ENCODE measurements at regions of chr11 and their contacts with region 1.

Region 1: DNA sequence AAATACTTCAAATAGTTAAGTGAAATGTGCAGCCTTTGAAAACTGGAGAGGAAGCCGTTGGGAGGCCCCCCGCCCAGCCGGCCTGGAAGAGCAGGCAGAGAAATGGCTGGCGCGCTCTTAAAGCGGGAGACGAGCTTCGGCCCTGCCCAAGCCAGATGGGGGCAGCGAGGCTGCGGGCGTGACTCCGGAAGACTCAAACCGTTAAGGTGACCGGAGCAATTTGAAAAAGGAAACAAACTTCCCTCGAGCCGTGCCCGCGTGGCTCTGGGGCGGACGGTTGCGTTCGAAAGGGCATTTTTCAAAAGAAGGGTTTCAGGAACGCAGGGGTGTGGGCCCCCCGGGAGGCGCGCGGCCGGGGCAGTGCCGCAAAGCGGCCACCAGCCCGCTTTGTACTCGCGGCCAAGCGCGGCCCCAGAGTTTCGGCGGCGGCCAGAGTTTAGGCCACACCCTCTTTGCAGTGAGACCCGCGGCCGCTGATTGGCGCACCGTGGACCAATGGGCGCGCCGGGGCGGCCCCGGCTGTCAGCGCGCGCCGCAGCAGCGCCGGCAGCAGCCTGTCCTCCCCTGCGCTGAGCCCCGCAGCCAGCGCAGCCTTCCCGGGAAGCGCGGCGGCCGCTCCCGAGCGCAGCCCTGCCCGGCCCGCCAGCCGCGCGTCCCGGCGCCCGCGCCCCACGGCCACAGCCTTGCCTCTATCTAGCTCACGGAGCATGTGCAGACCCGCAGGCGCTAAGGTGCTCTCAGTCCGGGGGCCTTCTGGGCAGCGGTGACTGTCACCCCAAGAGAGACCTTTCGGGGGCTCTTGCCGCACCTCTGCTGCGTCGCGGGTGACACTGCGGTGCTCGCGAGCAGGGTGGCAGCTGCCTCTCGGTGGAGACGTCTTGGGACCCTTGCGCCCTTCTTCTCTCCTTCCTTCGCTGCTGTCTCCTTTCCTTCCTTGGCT is at the start of gene NAV2:
- DNase-seq: peak; percentile 75
- H3K4me3 Mint-ChIP-seq: peak within 1 kb of the TSS; percentile 85
- H3K27ac Mint-ChIP-seq: peak within 1 kb of the TSS; percentile 78
- H3K4me1 Mint-ChIP-seq: peaks cover 17% of the 10 kb centered on the region
- H3K27me3 Mint-ChIP-seq: peaks cover 58% of the 10 kb centered on the region
- total RNA-seq, gene NAV2: 0.12 and 0.34 TPM in 2 replicates

Region 2: GRCh38 chr11:19116971-19117750 is 595.4 kb before region 1 on chr11 and contains the start of gene ZDHHC13:
- intact Hi-C with region 1: loop called (anchors 2 kb)
- DNase-seq: peak; percentile 94
- H3K4me3 Mint-ChIP-seq: peak within 1 kb of the TSS; percentile 93
- H3K27ac Mint-ChIP-seq: peak within 1 kb of the TSS; percentile 84
- H3K4me1 Mint-ChIP-seq: peaks cover 54% of the 10 kb centered on the region
- H3K27me3 Mint-ChIP-seq: peaks cover 12% of the 10 kb centered on the region
- total RNA-seq, gene ZDHHC13: 25.0 and 28.9 TPM in 2 replicates

Region 3: GRCh38 chr11:19441752-19442553 is 270.6 kb before region 1 on chr11:
- intact Hi-C with region 1: loop called (anchors 2 kb)
- DNase-seq: peak; percentile 41
- H3K4me3 Mint-ChIP-seq: no peak overlapping the region
- H3K27ac Mint-ChIP-seq: peak overlapping the region; percentile 18
- H3K4me1 Mint-ChIP-seq: peaks cover 24% of the 10 kb centered on the region
- H3K27me3 Mint-ChIP-seq: peaks cover 46% of the 10 kb centered on the region

Region 4: DNA sequence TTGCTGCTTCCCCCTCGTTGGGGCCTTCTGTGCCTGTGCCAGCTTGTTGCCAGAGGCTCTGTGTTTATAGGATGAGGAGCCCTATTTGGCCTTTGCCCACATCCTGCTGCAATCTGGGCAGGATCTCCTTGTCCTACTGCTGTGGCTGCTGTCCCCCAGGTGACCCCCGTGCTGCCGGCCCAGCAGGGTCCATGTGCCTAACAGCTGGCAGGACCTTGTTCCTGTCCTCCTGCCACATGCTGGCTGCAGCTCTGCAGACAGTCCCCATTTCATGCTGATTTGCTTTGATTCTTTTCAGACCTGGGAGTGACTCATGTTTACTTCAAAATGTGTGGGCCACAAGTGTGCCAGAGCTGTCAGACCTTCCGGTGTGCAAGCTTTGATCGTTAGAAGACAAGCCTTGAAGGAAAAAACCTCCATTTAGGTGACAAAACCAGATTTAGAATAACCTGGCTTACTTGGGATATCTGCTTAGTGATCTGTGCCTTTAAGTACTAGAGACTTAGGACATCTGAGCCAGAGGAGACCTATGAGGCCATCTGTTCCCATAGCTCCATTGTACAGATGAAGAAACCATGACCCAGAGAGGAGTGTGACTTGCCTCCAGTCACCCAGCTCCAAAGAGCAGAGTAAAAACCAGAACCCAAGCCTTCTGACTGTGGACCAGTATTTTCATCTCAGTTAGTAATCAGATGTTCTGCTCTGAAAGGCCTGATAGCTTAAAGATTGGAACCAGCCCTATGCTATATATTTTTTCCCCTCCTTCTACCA is 11.2 kb after region 1 on chr11:
- intact Hi-C with region 1: loop called (anchors 1 kb)
- DNase-seq: peak; percentile 18
- H3K4me3 Mint-ChIP-seq: no peak overlapping the region
- H3K27ac Mint-ChIP-seq: peak overlapping the region; percentile 49
- H3K4me1 Mint-ChIP-seq: peaks cover 12% of the 10 kb centered on the region
- H3K27me3 Mint-ChIP-seq: peaks cover 20% of the 10 kb centered on the region

Region 5: DNA sequence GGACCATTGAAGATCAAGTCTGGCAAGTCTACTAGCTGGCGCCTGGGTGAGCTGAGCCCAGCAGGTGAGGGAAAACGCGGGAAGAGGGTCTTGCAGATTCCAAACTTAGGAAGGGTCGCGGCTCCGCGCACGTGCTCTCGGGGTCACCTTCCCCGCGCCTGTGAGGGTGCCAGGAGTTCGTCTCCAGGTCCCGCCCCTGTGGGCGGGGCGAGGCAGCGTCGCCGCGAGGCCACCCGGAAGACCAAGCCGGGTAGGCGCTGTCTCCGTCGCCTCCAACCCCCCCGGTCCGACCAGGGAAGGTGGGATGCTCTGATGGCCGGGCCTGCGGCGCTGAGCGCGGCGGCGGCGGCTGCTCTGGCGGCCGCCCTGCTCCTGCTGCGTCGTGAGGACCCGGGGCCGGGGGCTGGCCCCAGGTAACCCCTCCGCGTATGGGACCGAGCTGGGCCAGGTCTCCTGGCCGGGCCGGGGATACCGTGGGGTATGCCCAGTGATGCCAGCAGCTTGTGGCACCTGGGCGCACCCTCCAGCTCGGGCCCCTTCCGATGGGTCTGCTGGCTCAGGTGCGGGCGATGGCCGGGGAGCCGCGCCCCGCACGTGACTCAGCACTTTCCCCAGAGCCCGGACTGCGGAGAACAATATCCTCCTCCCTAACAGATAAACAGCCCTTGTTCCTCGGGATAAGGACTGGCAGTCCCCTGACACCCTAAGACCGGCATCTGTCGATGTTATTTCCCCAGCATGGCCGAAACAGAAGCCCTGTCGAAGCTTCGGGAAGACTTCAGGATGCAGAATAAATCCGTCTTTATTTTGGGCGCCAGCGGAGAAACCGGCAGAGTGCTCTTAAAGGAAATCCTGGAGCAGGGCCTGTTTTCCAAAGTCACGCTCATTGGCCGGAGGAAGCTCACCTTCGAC is 651.2 kb after region 1 on chr11 and contains the start of gene HTATIP2:
- intact Hi-C with region 1: loop called (anchors 10 kb)
- DNase-seq: peak; percentile 67
- H3K4me3 Mint-ChIP-seq: peak within 1 kb of the TSS; percentile 90
- H3K27ac Mint-ChIP-seq: peak within 1 kb of the TSS; percentile 92
- H3K4me1 Mint-ChIP-seq: peaks cover 68% of the 10 kb centered on the region
- H3K27me3 Mint-ChIP-seq: no peaks in the 10 kb centered on the region
- total RNA-seq, gene HTATIP2: 40.8 and 43.9 TPM in 2 replicates

Measured in activated T-helper 1 cell treated with anti-CD3 and anti-CD28 coated beads, Interleukin-12 subunit alpha, Interleukin-12 subunit beta, Interleukin-2, Interleukin-4 antibody, amounts not matched to agents 30 ng/mL and 10 ng/mL and 1 ng/mL, durations not matched to agents 14 hours and 24 hours and 36 hours (primary cell).